HepG2 (cell line): ENCODE measurements at regions of chr3 and their contacts with region 1.

Region 1: GRCh38 chr3:157136647-157137387 is 23.1 kb downstream of the CCNL1 start:
- DNase-seq: peak; percentile 82
- ATAC-seq: peak; percentile 82
- H3K4me3 ChIP-seq: peak overlapping the region; percentile 3 to 43 (median 43); a peak in 2 of 6 replicates
- H3K27ac ChIP-seq: peak overlapping the region; percentile 89
- H3K4me1 ChIP-seq: peaks cover 56% of the 10 kb centered on the region
- H3K27me3 ChIP-seq: no peaks in the 10 kb centered on the region
- CTCF ChIP-seq: peak; percentile 44
- EP300 ChIP-seq: peak in 1 of 2 experiments; percentile 82; a peak in 2 of 4 replicates
- POLR2A ChIP-seq: peak; percentile 64 to 66
- RAD21 ChIP-seq: no peak

Region 2: DNA sequence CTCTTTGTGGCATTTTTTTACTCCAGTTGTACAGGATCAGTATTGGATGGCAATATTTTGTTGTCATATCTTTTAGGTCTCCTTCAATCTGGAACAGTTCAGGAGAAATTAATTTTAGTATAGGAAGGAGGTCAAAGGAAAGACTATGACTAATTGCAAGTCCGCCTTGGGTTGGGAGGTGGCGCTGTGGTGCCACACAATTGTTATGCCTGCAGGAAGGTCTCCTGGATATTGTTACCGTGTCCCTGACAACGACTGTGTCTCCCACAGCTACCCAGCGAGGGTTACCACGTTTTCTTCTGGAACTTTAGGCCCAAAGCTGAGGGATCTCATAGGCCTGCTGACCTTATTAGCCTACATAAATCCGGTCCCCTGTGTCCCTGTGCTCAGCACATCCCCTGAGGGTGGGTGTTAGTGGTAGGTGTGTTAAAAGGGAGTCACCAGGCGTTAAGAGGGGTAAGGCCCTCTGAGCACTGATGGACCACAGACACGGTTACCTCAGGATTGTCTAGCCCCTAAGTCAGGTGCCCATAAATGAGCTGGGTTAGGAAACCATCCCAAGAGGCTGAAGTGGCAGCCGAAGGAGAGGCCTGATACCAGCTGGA is 984.9 kb before region 1 on chr3:
- CTCF ChIA-PET with region 1: no interaction called
- POLR2A ChIA-PET with region 1: no interaction called
- in situ Hi-C with region 1: loop called (anchors 10 kb)
- intact Hi-C with region 1: loop called (anchors 5 kb)
- DNase-seq: peak; percentile 35
- ATAC-seq: peak; percentile 93
- H3K4me3 ChIP-seq: no peak overlapping the region
- H3K27ac ChIP-seq: no peak overlapping the region
- H3K4me1 ChIP-seq: no peaks in the 10 kb centered on the region
- H3K27me3 ChIP-seq: no peaks in the 10 kb centered on the region
- CTCF ChIP-seq: peak; percentile 85
- EP300 ChIP-seq: no peak
- POLR2A ChIP-seq: no peak
- RAD21 ChIP-seq: peak; percentile 76

Region 3: GRCh38 chr3:156535162-156535627 is 601.6 kb before region 1 on chr3:
- CTCF ChIA-PET with region 1: no interaction called
- POLR2A ChIA-PET with region 1: interaction called, 18 read pairs
- in situ Hi-C with region 1: loop called (anchors 10 kb)
- intact Hi-C with region 1: loop called (anchors 2 kb)
- DNase-seq: peak; percentile 96
- ATAC-seq: peak; percentile 90
- H3K4me3 ChIP-seq: peak overlapping the region in 1 of 3 experiments; percentile 19; a peak in 1 of 6 replicates
- H3K27ac ChIP-seq: peak overlapping the region; percentile 62
- H3K4me1 ChIP-seq: peaks cover 57% of the 10 kb centered on the region
- H3K27me3 ChIP-seq: no peaks in the 10 kb centered on the region
- CTCF ChIP-seq: peak; percentile 75
- EP300 ChIP-seq: peak; percentile 34 to 49; a peak in 3 of 4 replicates
- POLR2A ChIP-seq: peak; percentile 13 to 39; a peak in 1 of 4 replicates
- RAD21 ChIP-seq: peak; percentile 67

Region 4: GRCh38 chr3:156674046-156674910 is 462.5 kb before region 1 on chr3 and contains the start of gene TIPARP:
- CTCF ChIA-PET with region 1: interaction called, 8 read pairs
- POLR2A ChIA-PET with region 1: interaction called, 24 read pairs
- in situ Hi-C with region 1: loop called (anchors 10 kb)
- intact Hi-C with region 1: loop called (anchors 1 kb)
- DNase-seq: peak; percentile 92
- ATAC-seq: peak; percentile 92
- H3K4me3 ChIP-seq: peak within 1 kb of the TSS; percentile 76 to 96 (median 82)
- H3K27ac ChIP-seq: peak within 1 kb of the TSS; percentile 89
- H3K4me1 ChIP-seq: peaks cover 44% of the 10 kb centered on the region
- H3K27me3 ChIP-seq: no peaks in the 10 kb centered on the region
- CTCF ChIP-seq: peak; percentile 90
- EP300 ChIP-seq: peak in 1 of 2 experiments; percentile 14; a peak in 1 of 4 replicates
- POLR2A ChIP-seq: peak; percentile 98 to 99
- RAD21 ChIP-seq: peak; percentile 92
- total RNA-seq, gene TIPARP: 19.7 and 25.4 TPM in 2 replicates

Region 5: DNA sequence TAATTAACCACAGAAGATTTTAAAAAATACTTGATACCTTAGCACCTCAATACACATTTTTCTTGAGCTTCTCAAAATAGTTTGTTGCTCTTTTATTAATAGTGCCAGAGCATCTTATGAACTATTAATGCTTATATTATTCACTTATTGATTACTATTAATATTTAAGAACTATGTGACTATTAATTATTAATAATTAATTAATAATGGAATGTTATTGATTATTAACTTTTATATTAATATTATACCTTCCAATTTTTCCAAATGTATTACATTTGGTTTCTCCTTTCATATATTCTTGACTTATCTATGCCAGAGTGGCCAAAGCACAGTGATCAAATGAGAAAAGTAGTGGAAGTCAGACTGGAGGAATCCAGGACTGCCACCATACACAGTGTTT is 115.1 kb before region 1 on chr3:
- CTCF ChIA-PET with region 1: no interaction called
- POLR2A ChIA-PET with region 1: no interaction called
- in situ Hi-C with region 1: no loop called
- intact Hi-C with region 1: no loop called
- DNase-seq: no peak
- ATAC-seq: no peak
- H3K4me3 ChIP-seq: no peak overlapping the region
- H3K27ac ChIP-seq: no peak overlapping the region
- H3K4me1 ChIP-seq: no peaks in the 10 kb centered on the region
- H3K27me3 ChIP-seq: no peaks in the 10 kb centered on the region
- CTCF ChIP-seq: no peak
- EP300 ChIP-seq: no peak
- POLR2A ChIP-seq: no peak
- RAD21 ChIP-seq: no peak

Region 6: GRCh38 chr3:157088601-157089454 is 48.0 kb before region 1 on chr3:
- CTCF ChIA-PET with region 1: interaction called, 4 read pairs
- POLR2A ChIA-PET with region 1: interaction called, 204 read pairs
- in situ Hi-C with region 1: no loop called
- intact Hi-C with region 1: no loop called
- DNase-seq: peak; percentile 91
- ATAC-seq: peak; percentile 93
- H3K4me3 ChIP-seq: peak overlapping the region; percentile 56 to 67 (median 58)
- H3K27ac ChIP-seq: peak overlapping the region; percentile 96
- H3K4me1 ChIP-seq: peaks cover 43% of the 10 kb centered on the region
- H3K27me3 ChIP-seq: no peaks in the 10 kb centered on the region
- CTCF ChIP-seq: peak; percentile 54
- EP300 ChIP-seq: peak in 1 of 2 experiments; percentile 72; a peak in 1 of 4 replicates
- POLR2A ChIP-seq: peak; percentile 49 to 83
- RAD21 ChIP-seq: 0 out of 2 replicates have a peak, but pooled peaks have one; percentile 35

Region 7: DNA sequence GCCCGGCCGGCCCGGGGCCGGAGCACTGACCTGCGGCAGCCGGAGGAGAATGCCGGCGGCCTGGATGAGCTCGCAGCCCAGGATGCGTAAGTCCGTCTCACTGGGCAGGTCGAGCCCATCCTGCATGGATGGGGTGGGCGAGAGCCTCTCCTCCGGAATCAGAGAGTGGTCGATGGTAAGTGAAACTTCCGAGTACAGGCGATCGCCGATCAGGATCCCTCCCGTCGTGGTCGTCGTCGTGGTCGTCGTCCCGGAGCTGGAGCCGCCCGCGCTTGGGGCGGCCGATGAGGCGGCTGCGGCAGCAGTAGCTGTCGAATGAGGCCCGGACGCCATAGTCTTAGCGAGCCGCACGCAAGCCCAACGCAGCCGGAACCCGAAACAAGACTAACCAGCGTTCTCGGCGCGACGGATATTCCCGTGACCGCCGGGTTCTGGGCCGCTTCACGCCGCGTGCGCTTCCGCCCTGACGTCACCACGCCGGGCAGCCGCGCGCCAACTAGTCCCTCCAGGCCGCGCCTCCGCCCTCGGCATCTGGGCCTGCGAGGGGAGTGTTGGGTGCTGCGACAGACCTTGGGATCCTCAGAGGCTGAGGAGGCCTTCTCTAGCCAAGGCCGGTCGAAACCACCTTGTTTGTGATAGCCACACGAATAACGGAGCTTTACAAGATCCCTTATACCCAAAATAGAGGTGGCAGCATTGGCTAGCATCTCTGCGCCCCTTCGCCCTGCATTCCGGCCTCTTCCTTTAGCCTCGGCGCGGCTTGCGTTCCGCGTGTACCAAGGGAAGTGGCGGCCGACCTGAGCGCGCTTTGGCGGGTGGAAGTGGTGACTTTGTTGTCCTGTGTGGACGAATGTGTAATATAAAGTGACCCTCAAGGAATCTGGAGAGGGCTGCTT is 23.2 kb after region 1 on chr3 and contains the start of gene CCNL1:
- CTCF ChIA-PET with region 1: no interaction called
- POLR2A ChIA-PET with region 1: interaction called, 20 read pairs
- in situ Hi-C with region 1: no loop called
- intact Hi-C with region 1: no loop called
- DNase-seq: peak; percentile 88
- ATAC-seq: peak; percentile 87
- H3K4me3 ChIP-seq: peak within 1 kb of the TSS; percentile 94 to 99 (median 98)
- H3K27ac ChIP-seq: peak within 1 kb of the TSS; percentile 100
- H3K4me1 ChIP-seq: peaks cover 64% of the 10 kb centered on the region
- H3K27me3 ChIP-seq: no peaks in the 10 kb centered on the region
- CTCF ChIP-seq: 0 out of 2 replicates have a peak, but pooled peaks have one; percentile 15
- EP300 ChIP-seq: peak; percentile 58 to 70; a peak in 3 of 4 replicates
- POLR2A ChIP-seq: peak; percentile 97 to 99
- RAD21 ChIP-seq: peak; percentile 64
- total RNA-seq, gene CCNL1: 23.5 and 151 TPM in 2 replicates